Right lobe of liver (tissue), 6 donors: ENCODE measurements at regions of chr19 and their contacts with region 1.

Region 1: GRCh38 chr19:18419195-18419698 is at the start of gene SSBP4:
- DNase-seq: peak; percentile 74 to 80 (median 76)
- ATAC-seq: peak; percentile 17 to 46 (median 32)
- H3K4me3 ChIP-seq: peak within 1 kb of the TSS; percentile 48 to 70 (median 56)
- H3K27ac ChIP-seq: peak within 1 kb of the TSS in 2 of 3 donors; percentile 70 to 84
- H3K4me1 ChIP-seq: peaks cover 0 to 41% (median 15%) of the 10 kb centered on the region in 4 donors
- H3K27me3 ChIP-seq: peaks cover 0 to 5% of the 10 kb centered on the region in 2 donors
- CTCF ChIP-seq: peak; percentile 21 to 65 (median 40)
- POLR2A ChIP-seq: peak; percentile 61
- total RNA-seq, gene SSBP4: 12.8 to 23.9 (median 15.9) TPM

Region 2: DNA sequence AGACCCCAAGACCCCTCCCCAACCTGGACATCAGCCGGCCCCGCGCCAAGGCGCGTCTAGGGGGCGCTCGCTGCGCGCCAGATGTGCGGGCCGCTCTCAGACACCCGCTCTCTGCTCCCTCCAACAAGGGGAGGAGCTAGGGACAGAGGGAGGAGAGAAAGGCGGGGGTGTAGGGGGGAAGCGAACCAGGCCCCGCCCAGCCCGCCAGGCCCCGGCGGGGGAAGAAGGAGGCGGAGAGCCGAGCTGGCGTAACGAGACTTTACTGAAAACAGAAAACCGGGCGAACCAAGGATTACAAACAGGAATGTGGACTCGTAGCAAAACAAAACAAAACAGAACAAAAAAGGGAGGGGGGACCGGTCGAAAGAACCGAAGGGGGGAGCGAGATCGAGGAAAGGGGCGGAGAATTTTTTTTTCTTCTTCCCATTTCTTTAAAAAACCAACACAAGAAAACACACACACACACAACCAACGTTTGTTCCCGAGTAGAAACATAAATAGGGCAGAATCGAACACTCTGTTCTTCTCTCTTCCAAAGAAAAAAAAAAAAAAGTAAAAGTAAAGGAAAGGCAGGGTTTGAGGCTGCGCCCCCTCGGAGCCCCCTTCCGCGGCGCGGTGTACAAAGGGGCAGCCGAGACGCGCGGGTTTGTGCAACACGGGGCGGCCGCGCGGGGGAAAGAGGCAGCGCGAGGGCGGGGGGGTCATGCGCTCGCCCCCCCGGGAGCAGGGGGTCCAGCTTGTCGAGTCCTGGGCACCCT is 139.6 kb before region 1 on chr19:
- intact Hi-C with region 1: loop called in 1 of 2 experiments (anchors 10 kb)
- DNase-seq: peak; percentile 92 to 95 (median 94)
- ATAC-seq: peak; percentile 66 to 79 (median 68)
- H3K4me3 ChIP-seq: peak overlapping the region; percentile 82 to 93 (median 93)
- H3K27ac ChIP-seq: peak overlapping the region; percentile 100
- H3K4me1 ChIP-seq: peaks cover 0 to 51% (median 26%) of the 10 kb centered on the region in 4 donors
- H3K27me3 ChIP-seq: no peaks in the 10 kb centered on the region
- CTCF ChIP-seq: peak; percentile 82 to 90 (median 85)
- POLR2A ChIP-seq: peak; percentile 86

Region 3: DNA sequence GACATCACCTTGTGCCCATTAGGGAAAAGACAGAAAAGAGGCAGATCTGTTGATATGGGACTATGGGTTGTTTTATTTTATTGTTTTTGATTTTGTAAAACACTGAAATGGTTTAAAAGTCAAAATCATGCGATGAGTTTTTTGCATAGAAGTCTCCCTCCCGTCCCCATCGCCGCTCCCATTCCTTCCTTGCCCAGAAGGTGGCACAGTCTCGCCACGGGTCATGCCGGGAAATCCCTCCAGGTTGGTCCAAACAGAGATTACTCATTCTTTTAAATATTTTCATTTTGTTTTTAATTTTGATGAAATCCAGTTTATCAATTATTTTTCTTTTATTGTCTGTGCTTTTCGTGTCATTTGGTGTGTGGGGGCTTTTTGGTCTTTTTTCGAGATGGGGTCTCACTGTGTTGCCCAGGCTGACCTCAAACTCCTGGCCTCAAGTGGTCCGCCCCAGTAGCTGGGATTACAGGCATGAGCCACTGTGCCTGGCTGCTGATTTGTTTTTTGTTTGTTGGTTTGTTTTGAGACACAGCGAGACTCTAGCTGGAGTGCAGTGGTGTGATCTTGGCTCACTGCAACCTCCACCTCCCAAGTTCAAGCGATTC is 69.6 kb before region 1 on chr19:
- intact Hi-C with region 1: loop called in 1 of 2 experiments (anchors 5 kb)
- DNase-seq: peak in 2 of 3 donors; percentile 64
- ATAC-seq: peak; percentile 71 to 88 (median 78)
- H3K4me3 ChIP-seq: no peak overlapping the region
- H3K27ac ChIP-seq: no peak overlapping the region
- H3K4me1 ChIP-seq: no peaks in the 10 kb centered on the region
- H3K27me3 ChIP-seq: no peaks in the 10 kb centered on the region
- CTCF ChIP-seq: peak; percentile 65 to 85 (median 79)
- POLR2A ChIP-seq: no peak

Region 4: DNA sequence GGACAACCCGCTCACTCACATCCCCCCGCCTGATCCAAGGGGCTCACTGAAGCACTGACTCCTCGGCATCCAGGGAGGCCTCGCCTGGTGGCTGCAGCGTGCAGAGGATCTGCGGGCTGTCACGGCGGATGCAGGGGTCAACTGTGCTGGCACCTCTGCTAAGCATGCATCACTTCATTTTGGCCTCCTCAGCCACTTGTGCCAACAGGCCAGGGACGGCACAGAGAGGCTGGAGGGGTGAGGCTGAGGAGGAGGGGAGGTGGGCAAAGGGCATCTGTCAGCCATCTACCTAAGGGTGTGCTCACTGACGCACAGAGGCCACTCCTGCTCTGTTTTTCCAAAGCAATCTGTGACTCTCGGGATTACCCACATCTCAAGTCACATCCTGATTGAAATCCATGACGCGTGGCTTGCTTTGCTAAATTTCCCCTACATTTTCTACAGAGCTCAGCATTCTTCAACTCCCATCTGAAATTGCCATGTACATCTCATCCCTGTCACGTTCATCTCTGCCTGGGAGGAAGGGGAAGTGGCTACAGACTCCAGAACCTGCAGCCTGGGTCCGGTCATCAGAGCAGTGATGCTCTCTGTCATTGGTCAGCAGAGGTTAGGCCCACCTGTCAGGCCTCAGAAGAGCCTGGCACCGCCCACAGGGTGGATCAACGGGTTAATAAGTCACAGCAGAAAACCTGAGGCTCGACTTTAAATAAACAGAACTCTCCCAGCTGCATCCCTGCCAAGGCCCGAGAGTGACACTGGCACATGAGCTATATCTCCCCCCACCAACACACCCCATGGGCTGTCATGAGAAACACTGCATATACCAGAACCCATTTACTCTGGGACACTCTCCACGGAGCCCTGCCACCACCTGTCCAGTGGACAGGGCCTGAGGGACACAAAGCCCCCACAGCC is 85.0 kb after region 1 on chr19:
- intact Hi-C with region 1: no loop called
- DNase-seq: peak; percentile 84 to 94 (median 93)
- ATAC-seq: peak; percentile 69 to 81 (median 72)
- H3K4me3 ChIP-seq: peak overlapping the region in 1 of 3 donors; percentile 11
- H3K27ac ChIP-seq: peak overlapping the region; percentile 69 to 92 (median 89)
- H3K4me1 ChIP-seq: peaks cover 5 to 98% (median 71%) of the 10 kb centered on the region in 4 donors
- H3K27me3 ChIP-seq: no peaks in the 10 kb centered on the region
- CTCF ChIP-seq: no peak
- POLR2A ChIP-seq: peak; percentile 46